MCF 10A (cell line): ENCODE measurements at regions of chr2 and their contacts with region 1.

Region 1: DNA sequence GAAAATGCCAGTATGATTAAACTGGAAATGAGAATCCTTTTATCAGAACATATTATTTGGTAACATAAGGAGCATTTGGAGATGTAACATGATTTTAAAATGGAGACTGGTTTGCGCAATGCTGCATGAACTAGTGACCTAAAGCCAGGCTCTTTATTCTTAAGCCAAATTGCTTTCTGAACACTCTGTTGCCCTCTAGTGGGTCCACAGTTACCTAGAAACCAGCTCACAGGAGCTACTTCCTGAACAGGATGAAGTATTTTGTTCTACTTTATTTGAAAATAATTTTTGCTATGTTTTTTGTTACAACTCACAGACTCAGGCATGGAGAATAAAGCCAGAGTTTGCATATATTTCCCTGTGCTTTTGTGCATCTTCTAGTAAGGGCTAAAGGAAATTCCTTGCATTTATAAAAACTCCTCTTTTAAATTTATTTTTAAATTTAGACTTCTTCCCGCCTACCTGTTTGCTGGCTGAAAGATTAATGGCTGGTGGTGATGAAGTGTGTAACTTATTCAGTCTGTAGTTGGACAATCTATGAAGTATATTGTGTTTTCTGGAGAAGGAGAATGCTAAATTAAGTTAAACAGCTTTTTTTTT is 146.7 kb downstream of the PARD3B start:
- DNase-seq: peak; percentile 86
- H3K4me3 Mint-ChIP-seq: no peak overlapping the region
- H3K27ac Mint-ChIP-seq: no peak overlapping the region
- H3K4me1 Mint-ChIP-seq: peaks cover 4% of the 10 kb centered on the region
- H3K27me3 Mint-ChIP-seq: no peaks in the 10 kb centered on the region
- CTCF ChIP-seq: peak; percentile 76

Region 2: GRCh38 chr2:204005940-204006721 is 685.9 kb before region 1 on chr2:
- CTCF ChIA-PET with region 1: no interaction called
- POLR2A ChIA-PET with region 1: no interaction called
- intact Hi-C with region 1: no loop called
- DNase-seq: no peak
- H3K4me3 Mint-ChIP-seq: no peak overlapping the region
- H3K27ac Mint-ChIP-seq: no peak overlapping the region
- H3K4me1 Mint-ChIP-seq: no peaks in the 10 kb centered on the region
- H3K27me3 Mint-ChIP-seq: peaks cover 22% of the 10 kb centered on the region
- CTCF ChIP-seq: no peak

Region 3: DNA sequence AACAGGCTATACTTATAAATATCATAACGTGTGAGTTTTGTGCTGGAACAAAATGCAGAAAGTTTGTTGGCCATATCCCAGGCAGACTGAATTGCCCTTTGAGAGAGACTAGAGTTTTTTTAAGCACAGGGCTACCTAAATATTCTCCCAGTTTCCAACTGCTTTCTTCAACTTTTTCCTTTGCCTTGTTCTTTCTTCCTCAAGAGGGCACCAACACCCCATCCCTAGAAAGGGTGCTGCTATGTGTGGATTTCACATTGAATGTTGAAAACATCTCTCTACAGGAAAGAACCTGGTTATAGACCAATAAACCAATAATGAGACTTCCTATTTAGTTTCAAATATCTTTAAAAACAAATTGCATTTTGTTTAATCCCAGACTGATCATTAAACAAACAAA is 667.5 kb before region 1 on chr2:
- CTCF ChIA-PET with region 1: interaction called, 5 read pairs
- POLR2A ChIA-PET with region 1: no interaction called
- intact Hi-C with region 1: loop called (anchors 10 kb)
- DNase-seq: peak; percentile 64
- H3K4me3 Mint-ChIP-seq: no peak overlapping the region
- H3K27ac Mint-ChIP-seq: no peak overlapping the region
- H3K4me1 Mint-ChIP-seq: peaks cover 6% of the 10 kb centered on the region
- H3K27me3 Mint-ChIP-seq: no peaks in the 10 kb centered on the region
- CTCF ChIP-seq: peak; percentile 67

Region 4: DNA sequence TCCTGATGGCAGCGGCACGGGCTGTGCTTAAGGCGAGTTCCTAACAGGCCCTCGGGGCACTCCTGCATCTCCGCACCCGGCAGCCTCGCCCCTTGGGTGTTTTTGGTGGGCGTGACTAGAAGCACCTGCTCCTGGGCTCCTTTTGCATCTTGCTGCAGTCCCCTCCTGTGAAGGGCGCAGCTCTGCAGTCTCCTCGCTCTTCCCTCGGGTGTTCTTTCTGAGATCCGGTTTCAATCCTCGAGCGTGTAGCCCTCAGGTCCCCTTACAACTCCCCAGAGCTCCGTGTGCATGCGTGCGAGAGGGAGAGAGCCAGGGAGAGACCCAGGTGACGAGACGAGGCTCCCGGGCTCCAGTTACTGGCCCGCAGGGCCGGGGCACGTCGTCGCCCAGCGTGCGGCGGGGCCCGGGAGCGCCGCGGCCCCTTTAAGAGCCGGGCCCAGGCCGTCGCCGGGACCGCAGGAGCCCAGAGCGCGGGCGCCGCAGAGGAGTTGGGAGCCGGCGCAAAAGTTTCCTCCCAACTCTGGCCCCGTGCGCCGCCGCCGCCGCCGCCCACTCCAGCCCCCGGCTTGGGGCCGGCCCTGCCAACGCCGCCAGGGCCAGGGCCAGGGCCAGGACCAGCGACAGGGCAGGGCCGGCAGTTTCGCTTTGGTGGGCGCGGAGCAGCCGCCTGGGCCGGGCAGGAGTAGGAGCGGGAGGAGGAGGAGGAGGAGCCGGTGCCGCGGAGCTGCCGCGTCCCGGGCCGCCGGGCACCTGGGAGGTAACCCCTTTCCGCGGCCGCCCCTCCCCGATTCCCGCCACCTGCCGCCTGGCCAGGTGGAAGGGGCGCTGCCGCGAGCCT is 146.8 kb before region 1 on chr2 and contains the start of gene PARD3B:
- CTCF ChIA-PET with region 1: interaction called, 8 read pairs
- POLR2A ChIA-PET with region 1: interaction called, 14 read pairs
- intact Hi-C with region 1: loop called (anchors 2 kb)
- DNase-seq: peak; percentile 66
- H3K4me3 Mint-ChIP-seq: peak within 1 kb of the TSS; percentile 88
- H3K27ac Mint-ChIP-seq: peak within 1 kb of the TSS; percentile 88
- H3K4me1 Mint-ChIP-seq: peaks cover 8% of the 10 kb centered on the region
- H3K27me3 Mint-ChIP-seq: no peaks in the 10 kb centered on the region
- CTCF ChIP-seq: no peak
- total RNA-seq, gene PARD3B: 8.4 and 11.6 TPM in 2 replicates

Region 5: DNA sequence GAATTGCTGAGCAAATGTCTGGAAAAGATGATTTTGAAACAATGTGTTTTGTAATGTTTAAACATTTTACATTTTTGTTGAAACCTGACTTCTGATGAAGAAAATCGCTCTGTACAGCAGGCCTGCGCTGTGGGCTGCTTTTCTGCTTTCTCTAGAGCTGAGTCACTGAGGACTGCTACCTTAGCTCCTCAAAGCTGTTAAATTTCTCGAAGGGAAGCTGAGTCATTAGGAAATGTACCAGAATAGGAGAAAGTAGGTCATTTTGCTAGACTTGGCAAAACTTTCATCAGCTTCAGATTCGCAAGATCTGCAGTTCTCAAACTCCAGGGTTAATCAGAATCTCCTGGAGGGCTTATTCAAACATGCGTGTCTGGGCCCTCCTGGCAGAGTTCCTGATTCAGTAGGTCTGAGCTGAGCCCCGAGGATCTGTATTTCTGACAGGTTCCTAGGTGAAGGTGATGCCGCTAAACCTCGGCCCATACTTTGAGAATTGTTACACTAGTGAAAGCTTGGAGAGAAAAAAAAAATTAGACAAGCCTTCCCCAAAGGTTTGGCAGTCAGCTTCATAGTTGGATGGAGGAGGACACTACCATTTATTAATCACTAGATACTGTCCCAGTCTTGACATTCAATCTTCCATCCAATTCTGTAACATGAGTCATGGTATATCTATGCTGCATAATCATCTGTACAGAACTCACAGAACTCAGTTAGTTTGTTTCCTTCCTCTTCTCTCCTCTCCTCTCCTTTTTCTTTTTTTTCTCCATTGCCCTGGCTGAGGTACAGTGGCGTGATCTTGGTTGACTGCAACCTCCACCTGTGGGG is 150.9 kb after region 1 on chr2:
- CTCF ChIA-PET with region 1: interaction called, 3 read pairs
- POLR2A ChIA-PET with region 1: no interaction called
- intact Hi-C with region 1: loop called (anchors 10 kb)
- DNase-seq: peak; percentile 85
- H3K4me3 Mint-ChIP-seq: peak overlapping the region; percentile 47
- H3K27ac Mint-ChIP-seq: peak overlapping the region; percentile 49
- H3K4me1 Mint-ChIP-seq: peaks cover 19% of the 10 kb centered on the region
- H3K27me3 Mint-ChIP-seq: no peaks in the 10 kb centered on the region
- CTCF ChIP-seq: no peak